IMR-90 (cell line): ENCODE measurements at regions of chr21 and their contacts with region 1.

Region 1: DNA sequence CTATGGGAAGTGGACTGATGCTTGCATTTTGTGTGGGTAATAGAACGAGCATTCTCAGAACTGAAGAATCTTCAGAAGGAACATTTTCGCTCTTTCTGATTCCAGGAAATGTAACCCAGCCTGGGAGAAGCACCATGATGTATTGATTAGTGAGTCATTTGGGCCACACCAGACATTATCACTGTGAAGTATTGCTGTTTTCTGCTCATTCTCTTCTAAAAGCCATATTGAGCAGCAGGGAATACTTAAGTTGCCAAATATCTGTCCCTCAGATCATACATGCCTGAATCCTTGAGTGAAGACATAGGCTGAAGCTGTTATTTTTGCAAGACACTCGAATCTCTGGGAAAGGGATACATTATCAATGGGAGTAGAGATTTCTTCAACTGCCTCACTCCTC is 213.1 kb downstream of the PCP4 start:
- DNase-seq: no peak
- ATAC-seq: no peak
- H3K4me3 ChIP-seq: no peak overlapping the region
- H3K27ac ChIP-seq: no peak overlapping the region
- H3K4me1 ChIP-seq: no peaks in the 10 kb centered on the region
- H3K27me3 ChIP-seq: no peaks in the 10 kb centered on the region
- CTCF ChIP-seq: no peak
- POLR2A ChIP-seq: no peak
- RAD21 ChIP-seq: no peak

Region 2: DNA sequence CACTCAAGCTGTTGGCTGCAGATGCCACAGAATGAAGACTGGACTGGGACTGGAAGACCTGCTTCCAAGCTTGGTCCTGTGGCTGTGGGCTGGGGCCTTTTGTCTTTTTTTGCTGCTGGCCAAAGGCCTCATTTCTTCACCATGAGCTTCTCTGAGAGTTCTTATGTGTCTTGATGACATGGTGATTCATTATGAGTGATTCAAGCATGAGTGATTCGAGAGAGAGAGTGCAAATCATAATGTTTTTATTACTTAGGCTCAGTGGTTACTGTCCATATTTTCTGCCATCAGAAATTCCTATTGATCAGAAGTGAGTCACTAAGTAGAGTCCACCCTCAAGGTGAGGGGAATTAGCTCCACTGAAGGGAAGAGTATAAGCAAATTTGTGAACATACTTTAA is 119.1 kb before region 1 on chr21:
- CTCF ChIA-PET with region 1: no interaction called
- POLR2A ChIA-PET with region 1: no interaction called
- dilution Hi-C with region 1: no loop called
- in situ Hi-C with region 1: loop called (anchors 25 kb)
- intact Hi-C with region 1: no loop called
- DNase-seq: no peak
- ATAC-seq: no peak
- H3K4me3 ChIP-seq: no peak overlapping the region
- H3K27ac ChIP-seq: no peak overlapping the region
- H3K4me1 ChIP-seq: no peaks in the 10 kb centered on the region
- H3K27me3 ChIP-seq: no peaks in the 10 kb centered on the region
- CTCF ChIP-seq: no peak
- POLR2A ChIP-seq: no peak
- RAD21 ChIP-seq: no peak

Region 3: GRCh38 chr21:40186045-40186444 is 105.7 kb after region 1 on chr21:
- CTCF ChIA-PET with region 1: no interaction called
- POLR2A ChIA-PET with region 1: no interaction called
- dilution Hi-C with region 1: no loop called
- in situ Hi-C with region 1: loop called (anchors 25 kb)
- intact Hi-C with region 1: no loop called
- DNase-seq: no peak
- ATAC-seq: no peak
- H3K4me3 ChIP-seq: no peak overlapping the region
- H3K27ac ChIP-seq: no peak overlapping the region
- H3K4me1 ChIP-seq: no peaks in the 10 kb centered on the region
- H3K27me3 ChIP-seq: no peaks in the 10 kb centered on the region
- CTCF ChIP-seq: no peak
- POLR2A ChIP-seq: no peak
- RAD21 ChIP-seq: no peak